Spleen (tissue), 13 donors: ENCODE measurements at regions of chr1 and their contacts with region 1.

Region 1: GRCh38 chr1:75724472-75725022 is at the start of gene ACADM:
- DNase-seq: peak; percentile 98
- H3K4me3 ChIP-seq: peak within 1 kb of the TSS; percentile 65 to 82 (median 70)
- H3K27ac ChIP-seq: peak within 1 kb of the TSS; percentile 87 to 96 (median 92)
- H3K4me1 ChIP-seq: peaks cover 7 to 55% (median 37%) of the 10 kb centered on the region in 6 donors
- H3K27me3 ChIP-seq: no peaks in the 10 kb centered on the region
- CTCF ChIP-seq: peak in 3 of 11 experiments; percentile 13 to 45 (median 32)
- POLR2A ChIP-seq: peak in 2 of 3 donors; percentile 52 to 60
- total RNA-seq, gene ACADM: 50.2 to 74.4 (median 55.0) TPM

Region 2: DNA sequence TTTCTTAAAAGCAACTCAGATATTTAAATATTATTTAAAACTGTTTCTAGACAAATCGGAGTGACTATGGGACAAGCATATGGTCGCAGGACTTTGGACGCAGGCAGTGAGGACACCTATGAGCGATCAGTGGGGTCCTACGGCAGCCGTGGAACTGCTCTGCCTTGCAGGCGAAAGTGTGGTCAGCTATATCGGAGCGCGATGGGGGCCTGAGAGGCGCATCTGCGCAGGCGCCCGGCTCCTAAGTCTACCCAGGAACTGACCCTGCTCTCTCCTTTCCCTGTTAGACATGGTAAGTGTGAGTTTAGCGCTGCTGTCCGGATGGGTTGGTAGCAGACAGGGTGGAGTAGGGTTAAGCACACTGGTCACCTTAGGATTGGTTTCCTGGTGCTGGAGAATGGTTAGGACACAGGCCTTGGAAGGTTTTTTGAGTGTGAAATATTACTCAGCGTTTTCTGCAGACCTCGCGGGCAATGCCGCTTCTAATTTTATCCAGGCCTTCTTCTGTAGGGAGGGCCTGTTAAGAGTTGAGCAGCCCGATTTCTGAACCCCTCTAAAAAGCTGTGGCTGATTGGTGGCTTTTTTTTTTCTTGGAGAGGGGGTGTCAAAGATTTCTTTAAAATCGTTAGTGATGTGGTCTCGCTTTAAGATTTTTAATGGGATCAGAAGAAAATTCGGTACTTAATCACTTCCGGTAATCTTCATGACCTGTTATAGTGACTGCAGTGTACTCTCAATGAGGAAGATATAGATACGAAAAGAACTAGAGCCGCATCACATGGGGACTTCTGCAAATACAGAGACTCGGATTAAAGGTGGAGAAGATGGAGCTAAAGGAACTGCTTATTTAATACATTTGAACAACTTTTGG is 61.7 kb after region 1 on chr1 and contains the start of gene RABGGTB:
- intact Hi-C with region 1: loop called (anchors 10 kb)
- DNase-seq: peak; percentile 98
- H3K4me3 ChIP-seq: peak within 1 kb of the TSS; percentile 64 to 89 (median 76)
- H3K27ac ChIP-seq: peak within 1 kb of the TSS; percentile 85 to 94 (median 90)
- H3K4me1 ChIP-seq: peaks cover 40 to 66% (median 55%) of the 10 kb centered on the region in 6 donors
- H3K27me3 ChIP-seq: no peaks in the 10 kb centered on the region
- CTCF ChIP-seq: peak in 1 of 11 experiments; percentile 6
- POLR2A ChIP-seq: peak in 2 of 3 donors; percentile 49 to 67
- total RNA-seq, gene RABGGTB: 55.2 to 94.8 (median 78.2) TPM